Activated naive CD8-positive, alpha-beta T cell treated with anti-CD3 and anti-CD28 coated beads, Interleukin-2, amount 10 ng/mL, durations not matched to agents 7 days and 5 days (primary cell): ENCODE measurements at regions of chr17 and their contacts with region 1.

Region 1: DNA sequence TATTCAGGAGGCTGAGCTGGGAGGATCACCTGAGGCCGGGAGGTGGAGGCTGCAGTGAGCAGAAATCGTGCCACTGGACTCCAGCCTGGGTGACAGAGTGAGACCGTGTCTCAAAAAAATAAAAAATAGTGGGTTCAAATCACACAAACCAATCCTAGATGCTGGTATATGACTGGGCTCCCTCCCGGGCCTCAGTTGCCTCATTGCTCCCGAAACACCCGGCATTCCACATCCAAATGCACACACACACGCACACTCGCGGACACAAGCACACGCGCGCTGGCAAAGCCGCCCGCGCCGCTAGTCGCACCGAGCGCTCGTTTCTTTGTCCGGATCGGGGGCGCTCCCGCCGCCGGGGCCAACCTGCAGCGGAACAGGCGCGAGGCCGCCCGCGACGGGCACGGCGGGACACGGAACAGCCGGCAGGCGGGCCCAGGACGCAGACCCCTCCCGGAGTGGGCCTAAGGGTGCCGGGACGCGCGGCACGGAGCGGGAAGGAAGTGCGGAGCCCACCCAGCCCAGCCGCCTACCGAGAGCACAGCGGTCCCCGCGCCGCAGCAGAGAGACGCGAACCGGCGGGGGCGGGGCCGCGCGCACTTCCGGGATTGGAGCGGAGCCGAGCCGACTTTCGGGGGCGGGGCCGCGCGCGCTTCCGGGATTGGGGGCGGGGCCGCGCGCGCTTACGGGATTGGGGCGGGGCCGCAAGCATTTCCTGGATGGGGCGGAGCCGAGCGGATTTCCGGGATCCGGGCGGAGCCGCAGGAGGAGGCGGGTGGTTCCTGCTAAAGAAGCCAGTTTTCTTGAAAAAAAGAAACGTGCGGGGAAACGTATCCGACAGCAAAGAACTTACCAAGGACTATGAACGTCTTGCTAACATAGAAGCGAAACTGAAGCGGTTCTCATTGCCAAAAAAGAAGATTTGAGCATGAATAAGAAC is at the start of gene CYBC1:
- DNase-seq: peak; percentile 98
- ATAC-seq: peak; percentile 74
- H3K4me3 Mint-ChIP-seq: peak within 1 kb of the TSS; percentile 96
- H3K27ac Mint-ChIP-seq: peak within 1 kb of the TSS; percentile 97
- H3K4me1 Mint-ChIP-seq: peaks cover 27% of the 10 kb centered on the region
- H3K27me3 Mint-ChIP-seq: no peaks in the 10 kb centered on the region
- total RNA-seq, gene CYBC1: 301 to 323 TPM

Region 2: DNA sequence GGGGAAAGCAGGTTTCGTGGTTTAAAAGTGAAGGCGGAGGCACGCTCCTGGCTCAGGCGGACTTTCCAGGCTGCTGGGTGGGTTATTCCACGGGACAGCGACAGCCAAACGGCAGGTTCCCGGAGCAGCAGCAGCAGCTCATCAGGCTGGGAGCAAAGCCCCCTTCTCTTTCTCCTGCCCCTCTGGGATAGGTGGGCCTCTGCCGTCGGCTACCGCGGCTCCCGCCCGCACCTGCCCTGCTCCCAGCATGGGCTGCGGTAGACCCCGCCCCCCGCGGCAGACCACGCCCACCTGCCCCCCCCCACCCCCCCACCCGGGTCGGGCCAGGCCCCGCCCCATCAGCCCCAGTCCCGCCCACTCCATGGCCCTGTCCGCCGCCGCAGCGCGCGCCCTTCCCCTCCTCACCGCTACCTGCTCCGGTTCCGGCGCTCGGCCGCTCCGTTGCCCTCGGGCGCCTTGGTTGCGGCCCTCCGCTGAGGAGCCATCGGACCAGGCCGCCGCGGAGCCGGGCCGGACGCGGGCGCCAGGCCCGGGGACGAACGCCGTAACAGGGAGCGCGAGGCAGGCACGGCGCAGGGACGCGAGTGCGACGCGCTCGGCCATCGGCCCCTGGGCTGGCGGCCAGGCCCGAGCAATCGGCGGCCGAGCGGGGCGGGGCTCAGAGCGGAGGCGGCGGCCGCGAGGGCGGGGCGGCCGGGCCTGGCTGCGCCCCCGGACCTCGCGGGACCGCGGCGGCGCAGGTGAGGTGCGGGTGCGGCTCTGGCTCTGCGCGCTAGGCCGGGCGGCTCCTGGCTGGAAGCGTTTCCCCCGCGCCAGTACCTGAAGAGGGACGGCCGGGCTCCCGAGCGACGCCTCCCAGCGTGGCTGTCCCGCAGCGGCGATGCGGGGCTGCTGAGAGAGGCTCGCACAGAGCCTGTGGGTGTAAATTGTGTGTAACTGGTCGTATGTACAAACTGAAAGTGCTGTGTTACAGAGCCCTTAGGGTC is 32.1 kb before region 1 on chr17 and contains the starts of genes HEXD and OGFOD3:
- POLR2A ChIA-PET with region 1: interaction called, 28 read pairs
- DNase-seq: peak; percentile 96
- ATAC-seq: peak; percentile 83
- H3K4me3 Mint-ChIP-seq: peak within 1 kb of the TSS; percentile 86
- H3K27ac Mint-ChIP-seq: peak within 1 kb of the TSS; percentile 91
- H3K4me1 Mint-ChIP-seq: peaks cover 17% of the 10 kb centered on the region
- H3K27me3 Mint-ChIP-seq: no peaks in the 10 kb centered on the region
- total RNA-seq, gene HEXD: 84.1 to 84.8 TPM
- total RNA-seq, gene OGFOD3: 24.4 to 27.4 TPM

Region 3: DNA sequence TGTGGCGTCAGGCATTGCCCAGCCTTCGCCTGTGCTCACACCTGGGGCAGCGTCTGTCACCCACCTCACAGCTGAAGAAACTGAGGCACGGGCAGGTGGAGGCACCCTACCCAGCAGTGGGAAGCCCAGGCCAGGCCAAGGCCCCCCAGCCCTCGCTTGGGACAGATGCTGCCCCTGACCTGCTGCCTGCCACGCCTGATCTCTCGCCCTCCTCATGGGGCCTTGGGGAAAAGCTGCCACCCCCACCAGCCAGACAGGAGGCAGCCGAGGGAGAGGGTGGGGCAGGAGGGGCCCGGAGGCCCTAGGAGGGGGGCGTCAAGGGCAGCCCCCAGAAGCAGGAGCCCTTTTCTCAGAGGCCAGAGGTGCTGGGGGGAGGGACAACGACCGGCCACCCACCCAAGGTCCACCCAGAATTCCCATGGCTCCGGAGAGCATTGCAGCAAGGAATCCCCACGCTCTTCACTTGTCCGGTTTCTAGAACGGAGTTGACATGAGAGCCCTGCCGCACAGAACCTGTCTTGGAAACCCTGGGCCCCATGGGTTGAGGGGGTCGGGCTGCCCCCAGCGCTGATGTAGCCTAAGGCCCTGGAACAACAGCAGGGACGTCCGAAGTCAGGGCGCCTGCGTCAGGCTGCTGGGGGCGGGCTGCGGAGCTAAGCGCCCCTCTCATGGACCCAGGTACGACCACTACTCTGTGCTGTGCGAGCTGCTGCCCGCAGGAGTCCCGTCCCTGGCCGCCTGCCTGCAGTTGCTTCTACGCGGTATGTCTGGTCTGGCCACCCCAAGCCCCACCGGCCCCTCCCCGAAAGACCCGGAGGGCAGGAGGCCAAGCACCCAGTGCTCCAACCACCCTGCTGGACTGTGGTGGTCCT is 11.2 kb before region 1 on chr17:
- POLR2A ChIA-PET with region 1: interaction called, 11 read pairs
- DNase-seq: no peak
- ATAC-seq: no peak
- H3K4me3 Mint-ChIP-seq: no peak overlapping the region
- H3K27ac Mint-ChIP-seq: no peak overlapping the region
- H3K4me1 Mint-ChIP-seq: peaks cover 3% of the 10 kb centered on the region
- H3K27me3 Mint-ChIP-seq: no peaks in the 10 kb centered on the region

Region 4: DNA sequence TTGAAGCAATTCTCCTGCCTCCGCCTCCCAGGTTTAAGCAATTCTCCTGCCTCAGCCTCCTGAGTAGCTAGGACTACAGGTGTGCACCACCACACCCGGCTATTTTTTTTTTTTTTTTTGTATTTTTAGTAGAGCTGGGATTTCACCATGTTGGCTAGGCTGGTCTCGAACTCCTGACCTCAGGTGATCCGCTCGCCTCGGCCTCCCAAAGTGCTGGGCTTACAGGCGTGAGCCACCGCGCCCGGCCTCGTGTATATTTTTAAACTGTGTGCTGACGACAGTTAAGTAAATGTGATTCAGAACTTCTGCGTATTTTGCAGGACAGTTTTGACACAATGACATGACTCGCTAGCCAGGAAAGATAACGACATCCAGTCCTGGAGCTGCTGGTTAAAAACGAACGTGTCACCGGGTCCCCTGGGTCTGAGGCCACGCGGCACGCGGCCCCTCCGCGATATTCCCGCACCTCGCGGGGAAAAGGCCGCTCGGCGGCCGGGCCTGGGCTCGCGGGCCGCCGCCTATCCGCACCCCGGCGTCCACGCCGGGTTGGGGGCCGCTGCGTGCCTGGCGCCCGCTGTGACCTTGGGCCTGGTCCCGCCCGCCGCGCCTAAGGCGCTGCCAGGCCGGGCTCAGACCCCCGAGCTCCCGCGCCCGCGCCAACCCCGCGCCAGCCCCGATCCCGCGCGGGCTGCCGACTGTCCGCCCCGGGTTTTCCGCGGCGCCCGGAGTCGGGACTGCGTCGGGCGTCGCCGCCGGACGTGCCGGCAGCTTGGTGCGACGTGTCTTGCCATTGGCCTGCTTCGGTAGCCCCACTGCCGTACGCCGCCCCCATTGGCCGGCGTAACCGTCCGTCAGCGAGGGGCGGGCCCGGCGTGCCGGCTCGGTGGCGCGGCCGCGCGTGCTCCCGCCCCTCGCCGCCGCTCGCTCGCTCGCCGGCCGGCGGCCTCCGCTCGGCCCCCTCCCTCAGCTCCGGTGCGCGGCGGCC is 68.7 kb after region 1 on chr17 and contains the start of gene FOXK2:
- POLR2A ChIA-PET with region 1: interaction called, 16 read pairs
- DNase-seq: peak; percentile 100
- ATAC-seq: peak; percentile 98
- H3K4me3 Mint-ChIP-seq: peak within 1 kb of the TSS; percentile 86
- H3K27ac Mint-ChIP-seq: peak within 1 kb of the TSS; percentile 84
- H3K4me1 Mint-ChIP-seq: peaks cover 15% of the 10 kb centered on the region
- H3K27me3 Mint-ChIP-seq: no peaks in the 10 kb centered on the region
- total RNA-seq, gene FOXK2: 59.6 to 60.8 TPM